ENCODE measurements at regions of chr19 and their contacts with region 1.

Region 1: DNA sequence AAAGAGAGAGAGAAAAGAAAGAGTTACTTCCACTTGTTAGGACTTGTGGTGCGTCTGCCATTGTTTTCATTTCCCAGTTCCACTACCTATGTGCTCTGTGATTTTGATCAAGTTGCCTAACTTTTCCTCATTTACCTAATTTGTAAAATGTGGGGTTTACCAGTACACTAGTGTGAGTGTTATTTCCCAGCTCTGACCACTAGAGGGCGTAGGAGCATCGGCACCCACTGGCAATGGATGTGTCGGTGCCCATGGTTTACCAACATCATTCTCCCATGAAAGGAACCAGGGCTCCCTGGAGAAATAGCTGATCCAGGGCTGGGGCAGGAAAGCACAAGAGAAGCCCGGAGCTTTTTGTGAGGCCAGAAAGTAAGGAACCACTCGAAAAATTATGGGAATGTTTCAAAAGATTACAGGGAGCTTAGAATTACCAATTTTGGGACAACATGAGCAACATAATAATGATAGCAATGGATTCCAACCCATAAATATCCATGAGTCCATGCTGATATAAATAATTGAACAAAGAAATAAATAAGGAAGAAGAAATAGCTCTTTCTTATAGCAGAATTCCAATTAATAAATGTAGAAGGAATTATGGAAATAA is 15.1 kb upstream of the CEACAM4 start:
- DNase-seq: no peak
- H3K4me3 ChIP-seq: no peak overlapping the region
- H3K27me3 ChIP-seq: no peaks in the 10 kb centered on the region
- CTCF ChIP-seq: peak; percentile 89

Region 2: DNA sequence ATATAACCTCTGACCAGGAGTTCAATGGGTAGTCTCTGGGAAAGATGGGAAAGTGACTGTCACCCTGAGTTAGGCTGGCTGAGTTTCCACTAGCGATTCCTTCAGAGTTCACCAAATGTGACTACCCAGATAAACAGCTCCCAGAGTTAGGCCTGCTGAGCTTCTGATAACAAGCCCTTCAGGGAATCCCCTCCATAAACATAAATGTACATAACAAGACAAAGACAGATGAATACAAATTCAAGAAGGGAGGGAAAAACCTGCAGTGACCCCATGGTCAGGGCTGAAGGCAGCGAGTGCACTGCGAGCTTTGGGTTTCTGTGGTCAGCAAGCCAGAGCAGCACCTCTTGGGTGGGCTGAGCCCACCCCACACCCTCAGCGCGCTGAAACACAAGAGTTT is 10.3 kb after region 1 on chr19:
- CTCF ChIA-PET with region 1: interaction called, 26 read pairs
- POLR2A ChIA-PET with region 1: no interaction called
- DNase-seq: no peak
- H3K4me3 ChIP-seq: no peak overlapping the region
- H3K27me3 ChIP-seq: no peaks in the 10 kb centered on the region; the same call in 1 of the 2 replicates
- CTCF ChIP-seq: no peak

Region 3: DNA sequence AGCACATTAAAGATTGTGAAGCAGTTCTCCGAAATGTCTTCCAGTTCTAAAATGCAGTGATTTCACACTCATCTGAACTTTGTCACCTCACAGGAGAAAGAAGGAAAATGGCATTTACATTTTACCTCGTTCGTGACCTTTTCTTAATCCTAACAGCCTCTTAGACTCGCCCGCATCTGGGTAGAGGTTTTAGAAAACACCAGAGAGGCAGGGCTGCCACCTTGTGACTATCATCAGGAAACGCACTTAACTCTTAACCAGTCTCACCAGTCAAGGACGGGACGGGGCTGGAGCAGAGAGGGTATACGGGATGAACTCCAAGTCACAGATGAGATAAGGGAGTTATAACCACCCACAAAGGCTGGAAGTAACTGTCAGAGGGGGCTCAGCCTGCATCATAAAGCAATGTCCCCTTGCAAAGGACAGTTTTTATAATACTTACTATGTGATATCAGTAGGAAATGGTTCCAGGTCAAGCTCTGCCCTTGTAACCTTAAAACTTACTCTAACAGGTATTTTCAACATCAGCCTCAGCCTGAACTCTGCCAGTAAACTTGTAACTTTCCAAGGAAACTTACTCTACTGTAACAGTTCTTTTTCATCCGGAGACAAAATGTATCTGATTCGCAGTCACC is 104.7 kb after region 1 on chr19:
- CTCF ChIA-PET with region 1: interaction called, 26 read pairs
- POLR2A ChIA-PET with region 1: no interaction called
- DNase-seq: no peak
- H3K4me3 ChIP-seq: no peak overlapping the region
- H3K27me3 ChIP-seq: peaks cover 3% of the 10 kb centered on the region; the same call in 1 of the 2 replicates
- CTCF ChIP-seq: peak; percentile 64

Region 4: GRCh38 chr19:41753936-41754529 is 112.1 kb after region 1 on chr19:
- CTCF ChIA-PET with region 1: interaction called, 26 read pairs
- POLR2A ChIA-PET with region 1: no interaction called
- DNase-seq: no peak
- H3K4me3 ChIP-seq: no peak overlapping the region
- H3K27me3 ChIP-seq: peaks cover 6% of the 10 kb centered on the region
- CTCF ChIP-seq: peak; percentile 77

Region 5: GRCh38 chr19:41844601-41845000 is 202.6 kb after region 1 on chr19 and contains the start of gene LYPD4:
- CTCF ChIA-PET with region 1: no interaction called
- POLR2A ChIA-PET with region 1: no interaction called
- DNase-seq: no peak
- H3K4me3 ChIP-seq: no peak within 1 kb of the TSS
- H3K27me3 ChIP-seq: peaks cover 3% of the 10 kb centered on the region; the same call in 1 of the 2 replicates
- CTCF ChIP-seq: no peak
- polyA plus RNA-seq, gene LYPD4: not detected in 2 replicates